ENCODE measurements at regions of chr10 and their contacts with region 1.

Region 1: GRCh38 chr10:103918053-103918846 is at the start of gene STN1:
- DNase-seq: peak; percentile 98
- H3K4me3 ChIP-seq: peak within 1 kb of the TSS; percentile 66 to 89 (median 71)
- H3K27ac ChIP-seq: peak within 1 kb of the TSS; percentile 88 to 99 (median 93)
- H3K4me1 ChIP-seq: peaks cover 28 to 38% (median 34%) of the 10 kb centered on the region in 4 donors
- H3K27me3 ChIP-seq: no peaks in the 10 kb centered on the region
- CTCF ChIP-seq: no peak
- EP300 ChIP-seq: no peak
- POLR2A ChIP-seq: peak; percentile 95
- total RNA-seq, gene STN1: 18.7 to 27.7 (median 24.9) TPM

Region 2: DNA sequence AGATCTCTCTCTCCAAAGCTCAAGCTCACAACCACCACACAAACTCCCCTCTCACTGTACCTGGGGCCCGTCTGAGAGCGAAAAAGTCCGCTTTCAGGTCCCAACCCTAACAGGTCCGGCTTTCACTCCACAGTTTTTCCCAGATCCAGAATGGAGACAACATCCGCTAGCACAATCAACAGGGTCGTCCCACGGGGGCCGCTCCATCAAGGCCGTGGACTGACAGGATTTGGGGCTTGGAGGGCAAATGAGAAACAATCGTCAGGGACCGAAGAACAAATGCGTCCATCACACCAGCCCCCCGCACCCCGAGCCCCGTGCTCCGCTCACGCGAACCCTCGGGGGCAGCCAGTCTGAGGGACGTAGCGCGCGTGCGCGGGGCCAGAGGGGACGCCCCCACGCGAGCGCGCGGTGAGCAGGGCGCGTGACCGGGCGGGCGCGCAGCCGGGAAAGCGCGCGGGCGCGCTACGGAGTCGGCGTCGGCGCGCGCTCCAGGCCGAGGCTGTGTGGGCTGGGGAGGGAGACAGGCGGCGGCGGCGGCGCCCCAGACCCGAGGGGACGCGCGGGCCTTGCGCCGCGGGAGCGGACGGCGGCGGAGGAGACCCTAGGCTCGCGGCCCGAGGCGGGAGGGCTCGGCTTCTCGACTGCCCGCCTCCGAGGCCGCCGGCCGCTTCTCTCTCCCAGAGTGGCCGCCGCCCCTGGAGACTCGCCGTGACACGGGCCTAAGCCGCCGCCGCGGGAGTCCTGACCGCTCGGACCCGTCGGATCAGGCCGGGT is 48.6 kb after region 1 on chr10 and contains the start of gene SLK:
- intact Hi-C with region 1: loop called (anchors 5 kb)
- DNase-seq: no peak
- H3K4me3 ChIP-seq: peak within 1 kb of the TSS; percentile 71 to 97 (median 87)
- H3K27ac ChIP-seq: peak within 1 kb of the TSS; percentile 98 to 99 (median 99)
- H3K4me1 ChIP-seq: peaks cover 15 to 44% (median 40%) of the 10 kb centered on the region in 4 donors
- H3K27me3 ChIP-seq: no peaks in the 10 kb centered on the region
- CTCF ChIP-seq: no peak
- EP300 ChIP-seq: no peak
- POLR2A ChIP-seq: peak; percentile 37
- total RNA-seq, gene SLK: 83.1 to 105 (median 102) TPM